Mammary epithelial cell (primary cell): ENCODE measurements at regions of chr12 and their contacts with region 1.

Region 1: DNA sequence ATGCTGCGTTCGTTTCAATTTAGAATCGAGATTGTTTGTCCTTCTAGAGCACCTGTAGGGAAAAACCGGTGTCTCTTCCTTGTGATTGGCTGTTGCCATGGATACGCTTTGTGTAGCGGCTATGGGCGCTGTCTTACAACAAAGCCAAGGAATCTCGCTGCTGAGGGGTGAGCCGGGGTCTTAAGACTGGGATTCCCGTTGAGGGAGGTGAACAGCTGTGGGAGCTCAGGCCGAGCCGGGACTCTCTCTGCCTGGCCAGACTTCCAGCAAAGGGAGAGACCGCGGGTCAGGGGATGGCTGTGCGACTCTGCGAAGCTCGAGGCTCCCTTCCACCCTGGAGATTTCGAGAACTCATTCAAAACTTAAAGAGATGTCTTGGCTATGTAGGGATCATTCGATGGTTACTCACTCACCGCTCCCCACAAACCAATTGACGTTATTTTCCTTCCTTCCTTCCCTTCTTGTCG is at the starts of genes LRRIQ1 and TSPAN19:
- DNase-seq: peak; percentile 88
- H3K4me3 ChIP-seq: peak within 1 kb of the TSS; percentile 64 to 90 (median 75)
- H3K27ac ChIP-seq: peak within 1 kb of the TSS; percentile 77
- H3K4me1 ChIP-seq: peaks cover 3% of the 10 kb centered on the region
- H3K27me3 ChIP-seq: no peaks in the 10 kb centered on the region
- CTCF ChIP-seq: no peak
- total RNA-seq, gene LRRIQ1: 0.99 to 2.2 TPM
- total RNA-seq, gene TSPAN19: 0.67 to 0.68 TPM

Region 2: GRCh38 chr12:84637926-84638325 is 398.3 kb before region 1 on chr12:
- CTCF ChIA-PET with region 1: no interaction called
- dilution Hi-C with region 1: no loop called
- in situ Hi-C with region 1: no loop called
- intact Hi-C with region 1: loop called (anchors 10 kb)
- DNase-seq: no peak
- H3K4me3 ChIP-seq: no peak overlapping the region
- H3K27ac ChIP-seq: no peak overlapping the region
- H3K4me1 ChIP-seq: no peaks in the 10 kb centered on the region
- H3K27me3 ChIP-seq: no peaks in the 10 kb centered on the region
- CTCF ChIP-seq: no peak

Region 3: DNA sequence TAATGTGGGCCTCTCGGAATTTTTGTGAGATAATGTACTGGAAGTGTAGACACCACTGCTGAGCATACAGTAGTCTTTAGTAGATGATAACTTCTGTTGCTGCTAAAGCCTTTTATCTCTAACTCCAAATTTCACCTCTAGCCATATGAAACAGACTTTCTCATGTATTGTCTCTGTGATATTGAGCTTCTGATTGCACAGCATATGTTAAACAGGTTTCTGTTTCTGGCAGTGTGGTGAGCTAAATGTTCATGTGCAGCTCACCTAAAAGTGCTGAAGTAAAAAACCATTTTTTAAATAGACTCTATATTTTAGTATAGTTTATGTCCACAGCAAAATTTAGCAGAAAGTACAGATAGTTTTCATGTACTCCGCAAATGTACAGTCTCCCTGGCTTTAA is 154.5 kb after region 1 on chr12:
- CTCF ChIA-PET with region 1: no interaction called
- dilution Hi-C with region 1: no loop called
- in situ Hi-C with region 1: no loop called
- intact Hi-C with region 1: no loop called
- DNase-seq: no peak
- H3K4me3 ChIP-seq: no peak overlapping the region
- H3K27ac ChIP-seq: no peak overlapping the region
- H3K4me1 ChIP-seq: no peaks in the 10 kb centered on the region
- H3K27me3 ChIP-seq: no peaks in the 10 kb centered on the region
- CTCF ChIP-seq: no peak